Ovary (tissue), 10 donors: ENCODE measurements at regions of chr14 and their contacts with region 1.

Region 1: GRCh38 chr14:94615823-94616570 is 3.8 kb downstream of the SERPINA3 start:
- DNase-seq: no peak
- H3K4me3 ChIP-seq: no peak overlapping the region
- H3K27ac ChIP-seq: no peak overlapping the region
- H3K4me1 ChIP-seq: peaks cover 25% of the 10 kb centered on the region
- H3K27me3 ChIP-seq: no peaks in the 10 kb centered on the region
- CTCF ChIP-seq: no peak
- EP300 ChIP-seq: no peak
- POLR2A ChIP-seq: no peak

Region 2: GRCh38 chr14:95183532-95184412 is 567.8 kb after region 1 on chr14:
- intact Hi-C with region 1: loop called in 1 of 4 experiments (anchors 5 kb)
- DNase-seq: no peak
- H3K4me3 ChIP-seq: no peak overlapping the region
- H3K27ac ChIP-seq: no peak overlapping the region
- H3K4me1 ChIP-seq: peaks cover 2% of the 10 kb centered on the region
- H3K27me3 ChIP-seq: no peaks in the 10 kb centered on the region
- CTCF ChIP-seq: no peak
- EP300 ChIP-seq: no peak
- POLR2A ChIP-seq: no peak